ENCODE measurements at regions of chr10 and their contacts with region 1.

Region 1: DNA sequence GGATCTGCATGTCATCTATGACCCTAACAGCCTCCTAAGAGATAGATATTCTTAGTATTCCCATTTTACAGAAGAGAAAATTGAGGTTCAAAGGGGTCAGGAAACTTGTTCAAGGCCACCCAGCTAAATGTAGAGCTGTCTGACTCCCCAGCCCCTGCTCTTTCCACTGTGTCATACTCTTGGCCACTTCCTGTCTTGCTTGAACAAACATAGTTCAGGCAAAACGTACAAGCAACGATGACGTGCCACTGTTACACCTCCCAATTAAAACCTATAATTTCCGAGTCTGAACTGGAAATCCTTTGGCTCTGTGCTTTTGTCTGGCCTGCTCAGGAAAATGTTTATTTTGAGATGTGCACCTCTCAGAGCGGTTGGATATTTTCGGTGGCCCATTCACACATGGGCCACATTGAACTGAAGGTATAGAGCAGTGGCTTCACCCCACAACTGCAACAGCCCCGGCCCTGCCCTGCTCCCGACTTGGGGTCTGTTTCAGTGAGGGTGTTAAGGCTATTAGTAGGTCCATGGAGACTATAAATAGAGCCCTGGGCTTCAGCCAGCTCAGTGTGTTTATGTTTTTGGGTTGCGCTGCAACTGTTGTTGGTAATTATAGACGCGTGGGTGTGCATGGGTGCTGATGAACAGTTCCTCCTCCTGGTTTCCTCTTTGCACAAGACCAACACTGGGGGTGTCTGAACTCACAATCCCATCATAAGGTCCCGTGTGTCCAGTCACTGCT is 172.3 kb upstream of the ADO start:
- DNase-seq: peak; percentile 94 to 99 (median 95)
- H3K4me3 ChIP-seq: peak overlapping the region in 1 of 3 experiments; percentile 5
- H3K4me3 Mint-ChIP-seq: peak overlapping the region; percentile 27 to 28
- H3K27ac ChIP-seq: peak overlapping the region; percentile 90 to 99
- H3K27ac Mint-ChIP-seq: peak overlapping the region in 3 of 7 donors; percentile 98 to 100 (median 99)
- H3K4me1 ChIP-seq: peaks cover 59 to 62% of the 10 kb centered on the region in 2 donors
- H3K4me1 Mint-ChIP-seq: peaks cover 7% of the 10 kb centered on the region
- H3K27me3 ChIP-seq: no peaks in the 10 kb centered on the region
- H3K27me3 Mint-ChIP-seq: peaks cover 0 to 2% (median 0%) of the 10 kb centered on the region in 3 donors
- CTCF ChIP-seq: no peak

Region 2: GRCh38 chr10:62071846-62072281 is 560.4 kb before region 1 on chr10:
- intact Hi-C with region 1: no loop called
- DNase-seq: no peak
- H3K4me3 ChIP-seq: no peak overlapping the region
- H3K4me3 Mint-ChIP-seq: no peak overlapping the region
- H3K27ac ChIP-seq: no peak overlapping the region
- H3K27ac Mint-ChIP-seq: no peak overlapping the region
- H3K4me1 ChIP-seq: peaks cover 5 to 10% of the 10 kb centered on the region in 2 donors
- H3K4me1 Mint-ChIP-seq: peaks cover 8% of the 10 kb centered on the region
- H3K27me3 ChIP-seq: no peaks in the 10 kb centered on the region
- H3K27me3 Mint-ChIP-seq: peaks cover 0 to 2% (median 0%) of the 10 kb centered on the region in 3 donors
- CTCF ChIP-seq: no peak

Region 3: DNA sequence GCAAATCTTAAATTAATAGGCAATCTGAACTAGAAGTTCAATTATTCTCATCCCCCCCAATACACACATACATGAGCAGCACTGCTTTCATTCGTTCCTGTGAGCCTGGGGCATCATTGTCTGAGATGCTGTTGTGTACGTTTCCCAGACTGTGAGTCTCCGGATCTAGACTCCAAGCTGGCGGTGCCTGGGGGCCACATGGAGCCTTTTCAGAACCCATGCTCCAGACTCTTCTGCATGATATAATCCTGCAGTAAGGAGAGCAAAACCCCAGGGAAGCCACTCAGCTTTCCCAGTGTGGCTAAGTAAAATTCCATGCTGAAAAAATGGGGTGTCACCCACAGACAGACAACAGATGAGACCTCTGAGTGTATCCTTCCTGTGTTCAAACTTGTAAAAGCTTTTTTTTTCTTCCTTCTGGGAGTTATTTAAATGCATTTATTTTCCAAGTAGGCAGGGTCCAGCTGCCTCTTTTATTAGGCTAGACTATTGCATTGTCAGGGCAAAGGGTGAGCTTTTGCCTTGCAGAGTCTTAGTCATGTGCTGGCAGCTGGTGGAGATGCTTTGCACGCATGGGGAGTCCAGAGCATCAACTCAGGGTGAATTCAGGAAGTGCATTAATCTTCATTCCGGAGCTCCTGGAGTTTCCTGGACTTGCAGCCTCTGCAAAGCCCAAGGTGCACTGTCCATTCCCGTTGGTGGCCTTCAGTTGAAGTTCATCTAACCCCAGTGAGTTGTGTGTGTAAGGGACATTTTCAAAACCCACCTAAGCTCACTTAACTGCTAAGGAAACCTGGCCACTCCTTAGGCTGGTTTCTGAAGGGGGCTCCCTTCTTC is 13.4 kb before region 1 on chr10:
- intact Hi-C with region 1: loop called (anchors 2 kb)
- DNase-seq: peak; percentile 94 to 99 (median 99)
- H3K4me3 ChIP-seq: peak overlapping the region in 1 of 3 experiments; percentile 25
- H3K4me3 Mint-ChIP-seq: peak overlapping the region in 1 of 2 donors; percentile 1
- H3K27ac ChIP-seq: peak overlapping the region; percentile 96 to 99
- H3K27ac Mint-ChIP-seq: peak overlapping the region; percentile 92 to 98 (median 95)
- H3K4me1 ChIP-seq: peaks cover 79 to 82% of the 10 kb centered on the region in 2 donors
- H3K4me1 Mint-ChIP-seq: peaks cover 83% of the 10 kb centered on the region
- H3K27me3 ChIP-seq: no peaks in the 10 kb centered on the region
- H3K27me3 Mint-ChIP-seq: peaks cover 0 to 3% (median 0%) of the 10 kb centered on the region in 3 donors
- CTCF ChIP-seq: no peak

Region 4: GRCh38 chr10:62760401-62760800 is 128.2 kb after region 1 on chr10:
- intact Hi-C with region 1: loop called in 1 of 2 experiments (anchors 5 kb)
- DNase-seq: peak; percentile 61 to 73 (median 71)
- H3K4me3 ChIP-seq: peak overlapping the region in 1 of 3 experiments; percentile 22
- H3K4me3 Mint-ChIP-seq: peak overlapping the region; percentile 45 to 81
- H3K27ac ChIP-seq: peak overlapping the region; percentile 49 to 82
- H3K27ac Mint-ChIP-seq: peak overlapping the region; percentile 87 to 93 (median 89)
- H3K4me1 ChIP-seq: peaks cover 24 to 26% of the 10 kb centered on the region in 2 donors
- H3K4me1 Mint-ChIP-seq: peaks cover 30% of the 10 kb centered on the region
- H3K27me3 ChIP-seq: no peaks in the 10 kb centered on the region
- H3K27me3 Mint-ChIP-seq: peaks cover 2 to 6% (median 3%) of the 10 kb centered on the region in 3 donors
- CTCF ChIP-seq: no peak

Measured in CD14-positive monocyte (primary cell).